ENCODE measurements at regions of chr12 and their contacts with region 1.

Region 1: GRCh38 chr12:21248679-21249078 is 86.0 kb downstream of the SLCO1A2 start:
- DNase-seq: no peak
- H3K4me3 ChIP-seq: no peak overlapping the region
- H3K27ac ChIP-seq: no peak overlapping the region
- H3K27me3 ChIP-seq: no peaks in the 10 kb centered on the region
- CTCF ChIP-seq: no peak

Region 2: DNA sequence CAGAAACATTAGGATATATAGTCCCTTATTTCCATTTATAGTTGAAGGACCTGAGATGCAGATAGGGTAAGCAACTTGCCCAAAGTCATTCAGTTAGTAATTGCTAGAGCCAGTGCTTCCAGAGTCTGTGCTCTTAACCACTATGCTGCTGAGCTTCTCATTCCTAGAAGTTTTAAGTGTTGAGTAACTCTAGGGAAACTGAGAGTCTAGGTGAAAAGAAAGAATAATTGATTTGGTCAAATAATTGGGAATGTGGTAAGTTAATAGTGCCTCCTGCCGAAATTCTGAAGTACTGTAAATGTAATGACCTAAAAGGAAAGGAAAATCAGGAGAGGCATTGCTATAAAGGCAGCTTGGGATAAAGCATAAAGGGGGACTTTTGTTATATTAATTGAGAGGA is 202.8 kb after region 1 on chr12:
- CTCF ChIA-PET with region 1: interaction called, 11 read pairs
- POLR2A ChIA-PET with region 1: no interaction called
- DNase-seq: no peak
- H3K4me3 ChIP-seq: no peak overlapping the region
- H3K27ac ChIP-seq: no peak overlapping the region
- H3K27me3 ChIP-seq: no peaks in the 10 kb centered on the region
- CTCF ChIP-seq: 0 out of 2 replicates have a peak, but pooled peaks have one; percentile 15